B cell (primary cell): ENCODE measurements at regions of chr11 and their contacts with region 1.

Region 1: DNA sequence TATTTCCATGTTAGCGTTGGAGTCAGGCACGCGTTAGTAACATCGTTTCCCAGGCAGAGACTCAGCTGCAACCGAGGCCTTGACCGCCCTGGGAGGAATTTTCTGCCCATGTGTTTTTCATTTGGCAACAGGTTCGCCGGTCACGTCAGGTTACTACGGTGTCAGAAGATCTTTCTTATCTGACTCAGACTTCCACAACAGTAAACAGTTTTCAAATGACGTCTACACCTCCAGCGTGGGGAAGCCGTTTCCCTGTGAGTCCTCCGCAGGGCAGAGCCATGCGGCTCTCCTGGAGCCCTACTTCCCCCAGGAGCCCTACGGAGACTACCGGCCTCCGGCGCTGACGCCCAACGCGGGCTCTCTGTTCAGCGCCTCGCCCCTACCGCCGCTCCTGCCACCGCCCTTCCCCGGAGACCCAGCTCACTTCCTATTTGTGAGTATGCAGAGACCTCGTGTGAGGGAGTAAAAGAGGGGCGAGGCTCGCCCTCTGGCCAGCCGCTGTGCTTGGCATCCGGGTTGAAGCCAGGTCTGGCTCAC is 14.3 kb upstream of the POU2AF3 start:
- DNase-seq: peak; percentile 37
- ATAC-seq: peak; percentile 63
- H3K4me3 ChIP-seq: peak overlapping the region in 1 of 5 experiments; percentile 9
- H3K4me3 Mint-ChIP-seq: peak overlapping the region; percentile 49
- H3K27ac ChIP-seq: no peak overlapping the region
- H3K27ac Mint-ChIP-seq: no peak overlapping the region
- H3K4me1 ChIP-seq: peaks cover 12 to 16% of the 10 kb centered on the region in 2 donors
- H3K4me1 Mint-ChIP-seq: peaks cover 12% of the 10 kb centered on the region
- H3K27me3 ChIP-seq: no peaks in the 10 kb centered on the region
- H3K27me3 Mint-ChIP-seq: no peaks in the 10 kb centered on the region
- CTCF ChIP-seq: no peak

Region 2: GRCh38 chr11:110463153-110463552 is 820.9 kb before region 1 on chr11:
- CTCF ChIA-PET with region 1: interaction called, 15 read pairs
- POLR2A ChIA-PET with region 1: no interaction called
- intact Hi-C with region 1: no loop called
- DNase-seq: peak; percentile 47
- ATAC-seq: peak; percentile 33
- H3K4me3 ChIP-seq: no peak overlapping the region
- H3K4me3 Mint-ChIP-seq: no peak overlapping the region
- H3K27ac ChIP-seq: no peak overlapping the region
- H3K27ac Mint-ChIP-seq: no peak overlapping the region
- H3K4me1 ChIP-seq: no peaks in the 10 kb centered on the region
- H3K4me1 Mint-ChIP-seq: peaks cover 1% of the 10 kb centered on the region
- H3K27me3 ChIP-seq: no peaks in the 10 kb centered on the region
- H3K27me3 Mint-ChIP-seq: no peaks in the 10 kb centered on the region
- CTCF ChIP-seq: peak; percentile 46

Region 3: DNA sequence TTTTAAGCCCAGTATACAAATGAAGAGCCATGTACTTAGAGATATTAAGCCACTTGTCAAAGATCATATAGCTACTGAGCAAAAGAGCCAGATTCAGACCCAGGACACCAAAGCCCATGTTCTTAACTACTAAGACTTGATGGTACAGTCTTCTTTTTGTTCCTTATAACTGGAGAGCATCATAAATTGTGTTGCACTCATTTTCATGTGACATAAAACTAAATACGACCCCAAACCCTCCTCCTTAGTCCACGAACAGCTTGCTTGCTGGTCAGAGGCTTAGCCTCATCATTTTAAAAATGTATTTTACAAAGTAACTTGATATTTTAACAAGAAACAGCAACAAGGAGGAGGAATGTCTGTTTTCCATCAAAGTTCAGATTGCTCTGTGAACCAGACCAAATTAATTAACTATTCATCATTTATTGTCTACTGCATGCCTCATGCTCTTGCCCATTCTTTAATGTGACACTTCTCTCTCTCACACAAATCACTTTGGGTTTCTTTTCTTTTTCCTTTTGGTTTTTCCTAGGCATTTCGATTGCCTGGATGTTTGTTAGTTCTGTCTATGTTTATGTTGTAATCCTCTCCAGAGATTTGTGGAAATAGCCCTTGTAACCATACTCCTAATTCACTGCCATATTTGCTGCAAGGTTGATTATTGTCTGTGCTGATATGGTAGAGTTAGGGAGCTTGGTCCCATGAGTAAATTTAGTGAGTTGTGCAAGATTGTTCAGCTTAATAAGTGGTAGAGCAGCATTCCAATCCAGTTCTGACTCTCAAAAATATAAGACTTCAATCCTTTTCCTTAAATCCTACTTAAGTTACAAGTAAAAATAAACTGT is 563.4 kb before region 1 on chr11:
- CTCF ChIA-PET with region 1: no interaction called
- POLR2A ChIA-PET with region 1: no interaction called
- intact Hi-C with region 1: no loop called
- DNase-seq: no peak
- ATAC-seq: no peak
- H3K4me3 ChIP-seq: no peak overlapping the region
- H3K4me3 Mint-ChIP-seq: no peak overlapping the region
- H3K27ac ChIP-seq: no peak overlapping the region
- H3K27ac Mint-ChIP-seq: no peak overlapping the region
- H3K4me1 ChIP-seq: no peaks in the 10 kb centered on the region
- H3K4me1 Mint-ChIP-seq: no peaks in the 10 kb centered on the region
- H3K27me3 ChIP-seq: peaks cover 0 to 3% (median 0%) of the 10 kb centered on the region in 4 experiments
- H3K27me3 Mint-ChIP-seq: peaks cover 22% of the 10 kb centered on the region
- CTCF ChIP-seq: no peak

Region 4: GRCh38 chr11:111352935-111353710 is 69.1 kb after region 1 on chr11:
- CTCF ChIA-PET with region 1: interaction called, 16 read pairs
- POLR2A ChIA-PET with region 1: interaction called, 8 read pairs
- intact Hi-C with region 1: no loop called
- DNase-seq: peak; percentile 27
- ATAC-seq: peak; percentile 37
- H3K4me3 ChIP-seq: no peak overlapping the region
- H3K4me3 Mint-ChIP-seq: no peak overlapping the region
- H3K27ac ChIP-seq: peak overlapping the region in 1 of 2 donors; percentile 71
- H3K27ac Mint-ChIP-seq: peak overlapping the region; percentile 85
- H3K4me1 ChIP-seq: peaks cover 18 to 24% of the 10 kb centered on the region in 2 donors
- H3K4me1 Mint-ChIP-seq: peaks cover 62% of the 10 kb centered on the region
- H3K27me3 ChIP-seq: no peaks in the 10 kb centered on the region
- H3K27me3 Mint-ChIP-seq: no peaks in the 10 kb centered on the region
- CTCF ChIP-seq: no peak

Region 5: GRCh38 chr11:111429066-111429506 is 145.1 kb after region 1 on chr11:
- CTCF ChIA-PET with region 1: interaction called, 571 read pairs
- POLR2A ChIA-PET with region 1: no interaction called
- intact Hi-C with region 1: loop called (anchors 1 kb)
- DNase-seq: peak; percentile 75
- ATAC-seq: peak; percentile 89
- H3K4me3 ChIP-seq: no peak overlapping the region
- H3K4me3 Mint-ChIP-seq: no peak overlapping the region
- H3K27ac ChIP-seq: no peak overlapping the region
- H3K27ac Mint-ChIP-seq: no peak overlapping the region
- H3K4me1 ChIP-seq: no peaks in the 10 kb centered on the region
- H3K4me1 Mint-ChIP-seq: peaks cover 5% of the 10 kb centered on the region
- H3K27me3 ChIP-seq: peaks cover 0 to 4% (median 0%) of the 10 kb centered on the region in 4 experiments
- H3K27me3 Mint-ChIP-seq: no peaks in the 10 kb centered on the region
- CTCF ChIP-seq: peak; percentile 81

Region 6: GRCh38 chr11:111441443-111441842 is 157.4 kb after region 1 on chr11:
- CTCF ChIA-PET with region 1: interaction called, 83 read pairs
- POLR2A ChIA-PET with region 1: interaction called, 3 read pairs
- intact Hi-C with region 1: loop called (anchors 1 kb)
- DNase-seq: no peak
- ATAC-seq: no peak
- H3K4me3 ChIP-seq: no peak overlapping the region
- H3K4me3 Mint-ChIP-seq: no peak overlapping the region
- H3K27ac ChIP-seq: no peak overlapping the region
- H3K27ac Mint-ChIP-seq: no peak overlapping the region
- H3K4me1 ChIP-seq: peaks cover 23 to 36% of the 10 kb centered on the region in 2 donors
- H3K4me1 Mint-ChIP-seq: peaks cover 47% of the 10 kb centered on the region
- H3K27me3 ChIP-seq: peaks cover 0 to 3% (median 0%) of the 10 kb centered on the region in 4 experiments
- H3K27me3 Mint-ChIP-seq: no peaks in the 10 kb centered on the region
- CTCF ChIP-seq: no peak

Region 7: DNA sequence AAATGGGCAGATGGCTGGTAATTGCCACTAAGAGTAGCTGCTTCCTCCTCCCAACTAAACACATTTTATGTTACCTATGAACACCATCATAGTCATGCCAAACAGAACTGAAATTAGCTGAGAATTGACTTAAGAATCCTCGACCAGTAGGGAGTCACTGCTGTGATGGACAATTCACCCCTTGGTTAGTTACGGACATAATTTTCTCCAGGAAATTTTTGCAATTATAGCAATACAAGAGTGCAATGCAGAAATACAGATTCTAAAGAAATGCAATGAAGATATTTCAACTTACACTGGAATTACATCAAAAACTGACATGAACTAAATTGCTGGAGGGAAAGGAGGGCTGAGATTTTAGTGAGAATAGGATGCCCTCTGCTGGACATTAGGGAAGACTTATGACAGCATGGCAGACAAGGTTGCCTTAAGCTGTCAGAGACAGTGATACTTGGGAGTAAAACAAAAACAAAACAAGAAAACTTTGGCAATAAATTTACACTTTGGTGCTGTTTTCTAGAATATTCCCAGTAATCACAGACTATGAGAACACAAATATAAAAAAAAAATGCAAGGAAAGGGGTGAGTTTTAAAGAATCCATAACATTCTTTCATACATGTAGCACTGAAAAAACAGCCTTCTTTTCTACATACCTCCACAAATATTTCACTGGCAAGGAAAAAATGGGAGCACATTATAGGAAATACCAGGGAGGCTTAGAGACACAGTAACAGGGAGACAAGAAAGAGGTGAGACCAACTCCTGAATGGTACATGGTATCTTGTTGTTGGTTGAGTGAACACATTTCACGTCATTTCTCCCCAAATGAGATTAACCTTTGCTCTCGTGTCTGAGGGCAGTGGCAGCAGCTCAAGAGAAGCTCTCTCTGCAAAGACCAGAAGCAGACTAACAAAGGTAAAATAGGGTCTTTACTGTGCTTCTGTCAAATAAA is 493.4 kb after region 1 on chr11:
- CTCF ChIA-PET with region 1: interaction called, 7 read pairs
- POLR2A ChIA-PET with region 1: no interaction called
- intact Hi-C with region 1: loop called (anchors 2 kb)
- DNase-seq: peak; percentile 79
- ATAC-seq: peak; percentile 61
- H3K4me3 ChIP-seq: peak overlapping the region in 1 of 5 experiments; percentile 32
- H3K4me3 Mint-ChIP-seq: peak overlapping the region; percentile 82
- H3K27ac ChIP-seq: peak overlapping the region; percentile 63 to 76
- H3K27ac Mint-ChIP-seq: peak overlapping the region; percentile 91
- H3K4me1 ChIP-seq: peaks cover 17 to 21% of the 10 kb centered on the region in 2 donors
- H3K4me1 Mint-ChIP-seq: peaks cover 23% of the 10 kb centered on the region
- H3K27me3 ChIP-seq: no peaks in the 10 kb centered on the region
- H3K27me3 Mint-ChIP-seq: no peaks in the 10 kb centered on the region
- CTCF ChIP-seq: peak; percentile 81